Caco-2 (cell line): ENCODE measurements at regions of chr11 and their contacts with region 1.

Region 1: GRCh38 chr11:88231894-88232482 is 56.7 kb upstream of the RAB38 start:
- DNase-seq: peak in 1 of 2 experiments; percentile 54
- H3K4me3 ChIP-seq: no peak overlapping the region
- H3K4me3 Mint-ChIP-seq: no peak overlapping the region
- H3K27ac Mint-ChIP-seq: no peak overlapping the region
- H3K4me1 ChIP-seq: no peaks in the 10 kb centered on the region
- H3K4me1 Mint-ChIP-seq: no peaks in the 10 kb centered on the region
- H3K27me3 ChIP-seq: no peaks in the 10 kb centered on the region
- H3K27me3 Mint-ChIP-seq: no peaks in the 10 kb centered on the region
- CTCF ChIP-seq: peak; percentile 68 to 73

Region 2: GRCh38 chr11:88152381-88152780 is 79.6 kb before region 1 on chr11:
- CTCF ChIA-PET with region 1: no interaction called
- POLR2A ChIA-PET with region 1: no interaction called
- intact Hi-C with region 1: no loop called
- DNase-seq: no peak
- H3K4me3 ChIP-seq: no peak overlapping the region
- H3K4me3 Mint-ChIP-seq: no peak overlapping the region
- H3K27ac Mint-ChIP-seq: no peak overlapping the region
- H3K4me1 ChIP-seq: no peaks in the 10 kb centered on the region
- H3K4me1 Mint-ChIP-seq: no peaks in the 10 kb centered on the region
- H3K27me3 ChIP-seq: no peaks in the 10 kb centered on the region; the same call in 1 of the 2 replicates
- H3K27me3 Mint-ChIP-seq: peaks cover 3% of the 10 kb centered on the region
- CTCF ChIP-seq: no peak

Region 3: DNA sequence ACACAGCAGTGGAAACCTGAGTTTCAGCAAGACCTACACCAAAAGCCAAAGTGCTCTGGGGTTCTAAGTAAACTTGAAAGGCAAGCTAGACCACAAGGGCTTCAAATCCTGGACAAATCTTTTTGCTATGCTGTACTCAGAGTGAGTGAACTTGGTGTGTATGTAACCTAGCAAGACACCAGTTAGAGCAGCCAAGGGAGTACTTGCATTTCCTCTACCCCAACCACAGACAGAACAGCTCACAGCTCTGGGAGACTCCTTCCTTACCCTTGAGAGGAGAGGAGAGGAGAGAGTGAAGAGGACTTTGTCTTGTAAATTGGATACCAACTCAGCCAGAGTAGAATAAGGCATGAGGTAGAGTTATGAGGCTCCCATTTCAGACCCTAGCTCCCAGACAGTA is 34.2 kb after region 1 on chr11:
- CTCF ChIA-PET with region 1: no interaction called
- POLR2A ChIA-PET with region 1: no interaction called
- intact Hi-C with region 1: no loop called
- DNase-seq: no peak
- H3K4me3 ChIP-seq: no peak overlapping the region
- H3K4me3 Mint-ChIP-seq: no peak overlapping the region
- H3K27ac Mint-ChIP-seq: no peak overlapping the region
- H3K4me1 ChIP-seq: no peaks in the 10 kb centered on the region
- H3K4me1 Mint-ChIP-seq: no peaks in the 10 kb centered on the region
- H3K27me3 ChIP-seq: no peaks in the 10 kb centered on the region
- H3K27me3 Mint-ChIP-seq: no peaks in the 10 kb centered on the region
- CTCF ChIP-seq: no peak

Region 4: DNA sequence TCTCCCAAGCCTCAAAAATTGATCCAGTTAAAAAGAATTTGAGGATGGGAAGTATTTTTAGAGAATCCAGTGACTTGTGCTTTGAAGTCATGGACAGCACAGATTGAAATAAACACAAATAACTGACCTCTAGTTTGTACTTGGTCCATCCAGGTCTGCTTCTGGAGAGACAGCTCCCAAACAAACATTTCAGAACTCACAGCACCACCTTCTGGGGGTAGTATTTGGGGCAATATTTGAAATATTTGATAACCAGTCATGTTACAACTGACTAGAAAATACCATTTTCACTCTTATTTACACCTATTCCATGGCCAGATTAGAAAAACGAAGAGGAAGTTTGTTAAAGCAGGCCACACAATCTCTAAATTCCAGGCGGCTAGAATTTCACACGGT is 49.3 kb after region 1 on chr11:
- CTCF ChIA-PET with region 1: no interaction called
- POLR2A ChIA-PET with region 1: no interaction called
- intact Hi-C with region 1: loop called (anchors 1 kb)
- DNase-seq: peak in 1 of 2 experiments; percentile 25
- H3K4me3 ChIP-seq: no peak overlapping the region
- H3K4me3 Mint-ChIP-seq: no peak overlapping the region
- H3K27ac Mint-ChIP-seq: no peak overlapping the region
- H3K4me1 ChIP-seq: no peaks in the 10 kb centered on the region
- H3K4me1 Mint-ChIP-seq: no peaks in the 10 kb centered on the region
- H3K27me3 ChIP-seq: no peaks in the 10 kb centered on the region
- H3K27me3 Mint-ChIP-seq: no peaks in the 10 kb centered on the region
- CTCF ChIP-seq: peak; percentile 21 to 33

Region 5: GRCh38 chr11:88337181-88337986 is 105.4 kb after region 1 on chr11 and contains the start of gene CTSC:
- CTCF ChIA-PET with region 1: no interaction called
- POLR2A ChIA-PET with region 1: no interaction called
- intact Hi-C with region 1: loop called (anchors 5 kb)
- DNase-seq: peak; percentile 97 to 99
- H3K4me3 ChIP-seq: peak within 1 kb of the TSS; percentile 69
- H3K4me3 Mint-ChIP-seq: peak within 1 kb of the TSS; percentile 88
- H3K27ac Mint-ChIP-seq: peak within 1 kb of the TSS; percentile 82
- H3K4me1 ChIP-seq: no peaks in the 10 kb centered on the region; the same call in 1 of the 2 replicates
- H3K4me1 Mint-ChIP-seq: peaks cover 9% of the 10 kb centered on the region
- H3K27me3 ChIP-seq: no peaks in the 10 kb centered on the region
- H3K27me3 Mint-ChIP-seq: no peaks in the 10 kb centered on the region
- CTCF ChIP-seq: no peak
- total RNA-seq, gene CTSC: 250 and 308 TPM in 2 replicates

Region 6: DNA sequence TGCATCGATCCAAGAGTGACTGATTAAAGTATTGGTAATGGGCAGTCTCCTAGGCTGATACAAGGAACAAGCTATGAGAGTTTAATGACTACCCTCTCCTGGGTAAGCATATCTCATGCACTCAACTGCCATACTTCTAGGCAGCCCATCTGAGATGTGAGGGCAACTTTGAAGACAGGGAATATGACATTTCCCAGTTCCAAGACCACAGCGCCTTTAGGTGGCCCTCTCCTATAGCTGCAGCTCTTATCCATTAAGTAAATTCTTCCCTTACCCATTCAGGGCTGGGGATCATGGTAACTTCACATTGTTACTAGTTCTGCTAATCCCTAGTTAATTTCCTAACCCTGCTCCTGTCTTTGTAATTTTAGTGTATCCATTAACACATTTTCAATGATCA is 262.9 kb after region 1 on chr11:
- CTCF ChIA-PET with region 1: no interaction called
- POLR2A ChIA-PET with region 1: no interaction called
- intact Hi-C with region 1: loop called (anchors 5 kb)
- DNase-seq: no peak
- H3K4me3 ChIP-seq: no peak overlapping the region
- H3K4me3 Mint-ChIP-seq: no peak overlapping the region
- H3K27ac Mint-ChIP-seq: no peak overlapping the region
- H3K4me1 ChIP-seq: no peaks in the 10 kb centered on the region
- H3K4me1 Mint-ChIP-seq: peaks cover 6% of the 10 kb centered on the region
- H3K27me3 ChIP-seq: no peaks in the 10 kb centered on the region
- H3K27me3 Mint-ChIP-seq: peaks cover 3% of the 10 kb centered on the region
- CTCF ChIP-seq: peak in 1 of 2 experiments; percentile 11

Region 7: GRCh38 chr11:88590361-88590760 is 358.4 kb after region 1 on chr11:
- CTCF ChIA-PET with region 1: no interaction called
- POLR2A ChIA-PET with region 1: no interaction called
- intact Hi-C with region 1: no loop called
- DNase-seq: no peak
- H3K4me3 ChIP-seq: no peak overlapping the region
- H3K4me3 Mint-ChIP-seq: no peak overlapping the region
- H3K27ac Mint-ChIP-seq: no peak overlapping the region
- H3K4me1 ChIP-seq: no peaks in the 10 kb centered on the region
- H3K4me1 Mint-ChIP-seq: no peaks in the 10 kb centered on the region
- H3K27me3 ChIP-seq: no peaks in the 10 kb centered on the region
- H3K27me3 Mint-ChIP-seq: peaks cover 2% of the 10 kb centered on the region
- CTCF ChIP-seq: no peak

Region 8: GRCh38 chr11:88886796-88887195 is 654.8 kb after region 1 on chr11:
- CTCF ChIA-PET with region 1: no interaction called
- POLR2A ChIA-PET with region 1: no interaction called
- intact Hi-C with region 1: loop called (anchors 5 kb)
- DNase-seq: peak; percentile 57 to 72
- H3K4me3 ChIP-seq: no peak overlapping the region
- H3K4me3 Mint-ChIP-seq: no peak overlapping the region
- H3K27ac Mint-ChIP-seq: no peak overlapping the region
- H3K4me1 ChIP-seq: no peaks in the 10 kb centered on the region
- H3K4me1 Mint-ChIP-seq: no peaks in the 10 kb centered on the region
- H3K27me3 ChIP-seq: no peaks in the 10 kb centered on the region
- H3K27me3 Mint-ChIP-seq: peaks cover 2% of the 10 kb centered on the region
- CTCF ChIP-seq: peak; percentile 49 to 57